ENCODE measurements at regions of chr6 and their contacts with region 1.

Region 1: DNA sequence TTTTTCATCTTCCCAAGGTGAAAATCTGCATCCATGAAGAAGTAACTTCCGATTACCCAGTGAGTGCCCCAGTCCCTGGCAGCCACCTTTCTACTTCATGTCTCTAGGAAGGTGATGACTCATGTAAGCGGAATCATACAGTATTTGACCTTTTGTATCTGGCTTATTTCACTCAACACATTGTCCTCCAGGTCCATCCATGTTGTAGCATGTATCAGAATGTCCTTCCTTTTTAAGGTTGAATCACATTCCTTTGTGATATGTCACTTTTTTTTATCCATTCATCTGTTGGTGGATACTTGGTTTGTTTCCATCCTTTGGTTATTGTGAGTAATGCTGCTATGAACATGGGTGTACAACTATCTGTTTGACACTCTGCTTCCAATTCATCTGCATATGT is 176.3 kb upstream of the CDYL start:
- DNase-seq: peak; percentile 26 to 61
- H3K4me3 ChIP-seq: no peak overlapping the region
- H3K27ac ChIP-seq: no peak overlapping the region
- H3K4me1 ChIP-seq: 0 out of 2 replicates have a peak, but pooled peaks cover 12% of the 10 kb centered on the region
- H3K27me3 ChIP-seq: no peaks in the 10 kb centered on the region
- CTCF ChIP-seq: no peak

Region 2: DNA sequence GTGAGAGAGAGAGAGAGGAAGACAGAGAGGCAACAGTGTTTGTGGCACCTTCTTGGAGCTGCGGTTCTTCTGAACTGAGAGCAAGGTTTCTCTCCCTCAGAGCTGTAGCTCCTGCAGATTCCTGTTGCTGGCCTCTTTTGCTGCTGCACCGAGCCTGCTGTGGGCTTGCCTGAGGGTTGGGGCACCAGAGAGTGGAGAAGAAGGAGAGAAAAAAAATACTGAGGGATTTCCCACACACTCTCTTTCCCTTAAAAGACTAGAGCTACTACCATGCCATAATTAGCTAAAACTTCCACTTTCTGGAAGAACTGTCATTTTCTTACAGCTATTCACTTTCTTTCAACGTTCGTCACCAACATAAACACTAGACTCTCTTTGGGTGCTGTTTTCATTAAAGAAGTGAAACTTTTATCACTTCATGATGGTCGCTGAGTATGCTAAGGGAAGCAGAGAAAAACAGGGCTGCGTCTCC is 446.4 kb before region 1 on chr6:
- CTCF ChIA-PET with region 1: no interaction called
- POLR2A ChIA-PET with region 1: no interaction called
- intact Hi-C with region 1: no loop called
- DNase-seq: no peak
- H3K4me3 ChIP-seq: no peak overlapping the region
- H3K27ac ChIP-seq: no peak overlapping the region
- H3K4me1 ChIP-seq: no peaks in the 10 kb centered on the region
- H3K27me3 ChIP-seq: no peaks in the 10 kb centered on the region
- CTCF ChIP-seq: no peak

Region 3: GRCh38 chr6:4426890-4427486 is 172.9 kb before region 1 on chr6:
- CTCF ChIA-PET with region 1: no interaction called
- POLR2A ChIA-PET with region 1: no interaction called
- intact Hi-C with region 1: no loop called
- DNase-seq: no peak
- H3K4me3 ChIP-seq: no peak overlapping the region
- H3K27ac ChIP-seq: no peak overlapping the region
- H3K4me1 ChIP-seq: no peaks in the 10 kb centered on the region
- H3K27me3 ChIP-seq: no peaks in the 10 kb centered on the region
- CTCF ChIP-seq: no peak

Region 4: GRCh38 chr6:4941782-4942672 is 342.1 kb after region 1 on chr6:
- CTCF ChIA-PET with region 1: no interaction called
- POLR2A ChIA-PET with region 1: interaction called, 10 read pairs
- intact Hi-C with region 1: loop called (anchors 5 kb)
- DNase-seq: peak; percentile 80 to 89
- H3K4me3 ChIP-seq: no peak overlapping the region
- H3K27ac ChIP-seq: peak overlapping the region; percentile 66
- H3K4me1 ChIP-seq: peaks cover 32% of the 10 kb centered on the region
- H3K27me3 ChIP-seq: no peaks in the 10 kb centered on the region
- CTCF ChIP-seq: no peak

Measured in PC-9 (cell line).